Transverse colon (tissue), 4 donors: ENCODE measurements at regions of chr5 and their contacts with region 1.

Region 1: DNA sequence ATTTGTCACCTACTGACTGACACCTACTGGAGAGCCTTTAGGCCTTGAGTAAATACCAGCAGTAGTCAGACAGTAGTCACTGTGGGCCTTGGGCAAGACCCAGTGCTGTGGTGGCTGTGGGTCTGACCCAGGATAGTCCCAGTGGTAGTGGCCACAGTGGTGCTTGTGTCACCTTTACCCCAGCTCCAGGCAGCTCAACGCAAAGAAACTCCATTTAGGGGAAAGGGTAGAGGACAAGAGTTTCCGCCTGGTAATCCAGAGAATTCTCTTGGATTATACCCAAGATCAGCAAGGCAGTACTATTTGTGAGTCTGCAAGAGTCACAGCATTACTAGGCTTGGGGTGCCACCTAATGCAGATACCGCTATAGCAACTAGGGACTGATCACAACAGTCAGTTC is 28.9 kb downstream of the CERT1 start:
- DNase-seq: no peak
- H3K4me3 ChIP-seq: no peak overlapping the region
- H3K27ac ChIP-seq: no peak overlapping the region
- H3K4me1 ChIP-seq: no peaks in the 10 kb centered on the region
- H3K27me3 ChIP-seq: no peaks in the 10 kb centered on the region
- CTCF ChIP-seq: no peak
- EP300 ChIP-seq: no peak
- POLR2A ChIP-seq: no peak

Region 2: DNA sequence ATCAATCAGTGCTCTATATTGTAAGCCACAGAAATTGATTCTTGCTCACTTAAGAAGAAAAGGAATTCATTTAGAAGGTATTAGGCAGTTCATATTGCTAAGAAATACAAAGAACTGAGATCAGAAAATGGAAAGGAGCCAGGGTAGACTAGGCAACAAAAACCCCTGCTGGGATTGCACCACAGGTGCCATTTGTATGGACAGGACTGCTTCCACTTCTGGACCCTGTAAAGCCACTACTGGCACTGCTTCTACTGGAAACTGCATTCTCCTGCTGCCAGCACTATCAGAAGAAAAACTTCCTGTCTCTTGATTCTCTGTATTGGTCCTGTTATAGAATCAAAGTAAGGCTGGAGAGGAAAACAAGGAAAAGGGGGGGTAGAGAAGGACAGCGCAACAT is 17.0 kb before region 1 on chr5:
- in situ Hi-C with region 1: no loop called
- intact Hi-C with region 1: loop called (anchors 1 kb)
- DNase-seq: no peak
- H3K4me3 ChIP-seq: no peak overlapping the region
- H3K27ac ChIP-seq: no peak overlapping the region
- H3K4me1 ChIP-seq: peaks cover 0 to 9% (median 5%) of the 10 kb centered on the region in 4 donors
- H3K27me3 ChIP-seq: no peaks in the 10 kb centered on the region
- CTCF ChIP-seq: no peak
- EP300 ChIP-seq: no peak
- POLR2A ChIP-seq: no peak

Region 3: DNA sequence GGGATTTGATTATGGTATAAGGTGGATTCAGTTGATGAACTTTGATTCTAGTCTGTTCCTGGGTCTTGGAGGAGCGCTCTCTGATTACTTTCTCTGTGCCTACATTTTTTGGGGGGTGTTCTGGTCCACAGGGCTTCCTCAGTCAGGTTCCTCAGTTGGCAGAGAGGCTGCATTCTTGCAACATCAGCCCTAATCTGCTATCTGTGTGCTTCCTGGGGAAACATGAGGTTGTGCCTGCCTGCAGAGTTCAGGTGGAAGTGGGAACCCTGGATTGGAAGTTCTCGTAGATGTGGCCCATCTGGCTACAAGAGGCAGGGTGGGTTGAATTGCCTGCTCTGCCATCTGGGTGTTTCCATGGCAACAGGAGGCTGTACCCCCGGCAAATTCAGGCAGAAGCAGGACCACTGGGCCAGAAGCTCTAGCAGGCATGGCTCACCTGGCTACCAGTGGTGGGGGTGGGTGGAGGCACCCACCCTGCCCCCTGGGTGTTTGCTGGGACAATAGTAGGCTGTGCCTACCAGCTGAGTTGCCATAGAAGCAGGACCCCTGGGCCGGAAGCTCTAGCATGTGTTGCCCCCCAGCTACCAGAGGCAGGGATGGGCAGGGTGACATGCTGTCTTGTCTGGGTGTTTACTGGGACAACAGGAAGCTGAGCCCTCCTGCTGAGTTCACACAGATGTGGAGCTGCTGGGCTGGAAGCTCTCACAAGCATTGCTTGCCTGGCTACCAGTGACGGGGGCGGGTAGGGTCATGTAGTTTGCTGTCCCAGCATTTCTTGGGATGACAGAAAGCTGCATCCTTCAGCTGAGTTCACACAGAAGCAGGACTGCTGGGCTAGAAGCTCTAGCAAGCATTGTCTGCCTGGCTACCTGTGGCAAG is 53.9 kb after region 1 on chr5:
- in situ Hi-C with region 1: no loop called
- intact Hi-C with region 1: no loop called
- DNase-seq: no peak
- H3K4me3 ChIP-seq: no peak overlapping the region
- H3K27ac ChIP-seq: no peak overlapping the region
- H3K4me1 ChIP-seq: peaks cover 0 to 5% (median 2%) of the 10 kb centered on the region in 4 donors
- H3K27me3 ChIP-seq: no peaks in the 10 kb centered on the region
- CTCF ChIP-seq: no peak
- EP300 ChIP-seq: no peak
- POLR2A ChIP-seq: no peak

Region 4: GRCh38 chr5:75744355-75744754 is 261.9 kb after region 1 on chr5:
- in situ Hi-C with region 1: no loop called
- intact Hi-C with region 1: no loop called
- DNase-seq: no peak
- H3K4me3 ChIP-seq: no peak overlapping the region
- H3K27ac ChIP-seq: no peak overlapping the region
- H3K4me1 ChIP-seq: no peaks in the 10 kb centered on the region
- H3K27me3 ChIP-seq: no peaks in the 10 kb centered on the region
- CTCF ChIP-seq: no peak
- EP300 ChIP-seq: no peak
- POLR2A ChIP-seq: no peak